WTC11 (cell line): ENCODE measurements at regions of chr22 and their contacts with region 1.

Region 1: GRCh38 chr22:27871306-27872014 is 47.6 kb downstream of the PITPNB start:
- DNase-seq: no peak
- ATAC-seq: no peak
- H3K4me3 Mint-ChIP-seq: no peak overlapping the region
- H3K27ac Mint-ChIP-seq: no peak overlapping the region; the same call in 1 of the 2 replicates
- H3K4me1 Mint-ChIP-seq: peaks cover 31% of the 10 kb centered on the region
- H3K27me3 Mint-ChIP-seq: no peaks in the 10 kb centered on the region
- CTCF ChIP-seq: no peak

Region 2: DNA sequence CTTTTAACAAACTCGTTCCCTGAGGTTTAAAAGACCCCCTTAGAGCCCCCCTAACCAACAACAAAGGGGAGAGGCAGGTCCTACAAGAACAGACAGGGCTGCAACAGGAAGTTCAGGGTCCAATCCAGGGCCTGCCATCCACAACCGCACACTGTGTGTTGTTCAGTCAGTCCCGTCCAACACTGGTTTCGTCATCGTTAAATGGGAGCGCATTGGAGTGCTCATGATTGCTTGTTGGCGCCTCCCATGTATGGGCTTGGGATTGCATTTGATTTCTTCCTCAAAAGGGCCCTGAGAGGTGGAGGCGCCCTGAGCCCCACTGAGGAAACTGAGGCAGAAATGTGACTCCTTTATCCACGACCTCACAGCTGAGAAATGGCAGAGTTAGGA is 244.0 kb before region 1 on chr22:
- CTCF ChIA-PET with region 1: no interaction called
- POLR2A ChIA-PET with region 1: interaction called, 12 read pairs
- DNase-seq: no peak
- ATAC-seq: peak; percentile 46
- H3K4me3 Mint-ChIP-seq: no peak overlapping the region
- H3K27ac Mint-ChIP-seq: no peak overlapping the region
- H3K4me1 Mint-ChIP-seq: peaks cover 36% of the 10 kb centered on the region
- H3K27me3 Mint-ChIP-seq: no peaks in the 10 kb centered on the region; the same call in 1 of the 2 replicates
- CTCF ChIP-seq: no peak; the same call in 1 of the 2 replicates

Region 3: GRCh38 chr22:27850000-27850465 is 21.4 kb before region 1 on chr22:
- CTCF ChIA-PET with region 1: no interaction called
- POLR2A ChIA-PET with region 1: no interaction called
- DNase-seq: no peak
- ATAC-seq: peak; percentile 79
- H3K4me3 Mint-ChIP-seq: no peak overlapping the region; the same call in 1 of the 2 replicates
- H3K27ac Mint-ChIP-seq: peak overlapping the region; percentile 88
- H3K4me1 Mint-ChIP-seq: peaks cover 66% of the 10 kb centered on the region
- H3K27me3 Mint-ChIP-seq: no peaks in the 10 kb centered on the region
- CTCF ChIP-seq: no peak

Region 4: GRCh38 chr22:28053896-28054818 is 182.7 kb after region 1 on chr22:
- CTCF ChIA-PET with region 1: no interaction called
- POLR2A ChIA-PET with region 1: no interaction called
- DNase-seq: no peak
- ATAC-seq: no peak
- H3K4me3 Mint-ChIP-seq: no peak overlapping the region
- H3K27ac Mint-ChIP-seq: no peak overlapping the region
- H3K4me1 Mint-ChIP-seq: peaks cover 3% of the 10 kb centered on the region
- H3K27me3 Mint-ChIP-seq: no peaks in the 10 kb centered on the region
- CTCF ChIP-seq: no peak